Body of pancreas (tissue), 4 donors: ENCODE measurements at regions of chr5 and their contacts with region 1.

Region 1: GRCh38 chr5:166979307-166979895 is 1312.0 kb upstream of the WWC1 start:
- DNase-seq: no peak
- ATAC-seq: no peak
- H3K4me3 ChIP-seq: peak overlapping the region; percentile 37 to 57
- H3K27ac ChIP-seq: peak overlapping the region in 3 of 4 donors; percentile 38 to 59 (median 45)
- H3K4me1 ChIP-seq: peaks cover 42% of the 10 kb centered on the region
- H3K27me3 ChIP-seq: no peaks in the 10 kb centered on the region
- CTCF ChIP-seq: no peak
- POLR2A ChIP-seq: peak in 1 of 3 donors; percentile 5

Region 2: DNA sequence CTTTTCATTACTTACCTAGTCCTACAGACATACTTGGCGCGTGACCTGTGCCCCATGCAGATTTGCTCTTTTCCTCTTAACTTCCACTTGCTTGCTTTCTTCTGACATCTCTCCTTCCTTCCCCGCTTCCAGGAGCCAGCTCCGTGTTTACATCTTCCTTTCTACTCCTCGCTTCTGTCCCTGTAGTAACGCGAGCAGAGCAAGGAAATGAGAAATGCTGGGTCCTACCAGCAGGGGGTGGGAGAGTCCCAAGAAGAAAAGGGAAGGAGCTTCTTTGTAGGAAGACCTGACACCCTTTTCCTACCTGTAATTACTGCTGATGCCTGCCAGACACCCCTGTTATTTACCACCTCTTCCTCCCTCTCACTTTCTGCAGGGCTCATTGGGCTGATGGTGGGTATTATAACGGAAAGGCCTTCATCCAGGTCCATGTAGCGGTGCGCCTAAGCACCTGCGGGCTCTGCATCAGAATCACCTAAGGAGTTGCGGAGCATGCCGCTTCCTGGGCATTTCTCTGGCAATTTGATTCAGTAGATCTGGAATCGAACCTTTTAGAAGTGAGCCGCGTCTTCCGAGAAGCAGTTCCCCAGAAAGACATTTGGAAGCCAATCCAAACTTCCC is 51.2 kb after region 1 on chr5:
- intact Hi-C with region 1: loop called (anchors 10 kb)
- DNase-seq: peak in 3 of 4 donors; percentile 19 to 45 (median 26)
- ATAC-seq: no peak
- H3K4me3 ChIP-seq: no peak overlapping the region
- H3K27ac ChIP-seq: no peak overlapping the region
- H3K4me1 ChIP-seq: peaks cover 12% of the 10 kb centered on the region
- H3K27me3 ChIP-seq: no peaks in the 10 kb centered on the region
- CTCF ChIP-seq: peak in 5 of 7 experiments; percentile 11 to 41 (median 25)
- POLR2A ChIP-seq: no peak